ENCODE measurements at regions of chr19 and their contacts with region 1.

Region 1: DNA sequence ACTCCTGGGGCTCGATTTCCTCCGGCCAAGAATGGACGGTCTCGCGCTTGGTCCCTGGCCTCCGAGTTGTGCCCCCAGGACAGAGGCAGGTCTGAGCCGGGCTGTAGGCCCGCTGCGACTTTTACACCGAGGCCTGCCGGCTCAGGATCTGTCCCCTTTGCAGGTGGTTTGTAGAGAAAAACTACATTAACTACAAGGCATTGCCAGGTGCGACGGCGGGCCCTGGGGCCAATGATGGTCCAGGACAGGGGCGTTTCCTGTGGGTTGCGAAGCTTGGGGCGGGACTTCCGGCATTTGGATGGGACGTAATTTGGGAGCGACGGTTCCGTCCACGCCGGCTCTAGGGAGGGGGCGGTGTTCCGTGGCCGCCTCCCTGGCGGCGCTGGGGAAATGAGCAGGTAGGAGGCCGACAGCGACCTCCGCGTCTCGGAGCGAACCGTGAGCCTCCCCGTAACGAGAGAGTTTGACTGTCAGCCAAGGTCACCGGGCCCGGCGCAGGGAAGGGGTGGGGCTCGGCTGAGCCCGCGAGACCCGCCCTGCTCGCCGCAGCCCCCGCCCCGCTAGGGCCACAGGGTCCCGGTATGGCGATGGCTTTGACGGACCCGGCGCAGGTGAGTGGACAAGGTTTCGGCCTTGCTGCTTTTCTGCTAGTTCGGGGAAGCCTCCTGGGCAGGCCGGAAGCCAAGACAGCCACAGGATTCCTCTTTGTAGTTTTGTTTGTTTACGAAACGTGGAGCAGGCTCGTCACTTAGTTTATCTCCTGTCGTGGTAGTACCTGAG is at the start of gene ZNF805:
- DNase-seq: peak; percentile 99
- total RNA-seq, gene ZNF805: 12.9 to 15.5 TPM

Region 2: GRCh38 chr19:57279418-57280066 is 39.0 kb after region 1 on chr19:
- intact Hi-C with region 1: loop called in 1 of 2 experiments (anchors 5 kb)
- DNase-seq: peak; percentile 98

Measured in posterior vena cava (tissue), 2 donors.